ENCODE measurements at regions of chr19 and their contacts with region 1.

Region 1: DNA sequence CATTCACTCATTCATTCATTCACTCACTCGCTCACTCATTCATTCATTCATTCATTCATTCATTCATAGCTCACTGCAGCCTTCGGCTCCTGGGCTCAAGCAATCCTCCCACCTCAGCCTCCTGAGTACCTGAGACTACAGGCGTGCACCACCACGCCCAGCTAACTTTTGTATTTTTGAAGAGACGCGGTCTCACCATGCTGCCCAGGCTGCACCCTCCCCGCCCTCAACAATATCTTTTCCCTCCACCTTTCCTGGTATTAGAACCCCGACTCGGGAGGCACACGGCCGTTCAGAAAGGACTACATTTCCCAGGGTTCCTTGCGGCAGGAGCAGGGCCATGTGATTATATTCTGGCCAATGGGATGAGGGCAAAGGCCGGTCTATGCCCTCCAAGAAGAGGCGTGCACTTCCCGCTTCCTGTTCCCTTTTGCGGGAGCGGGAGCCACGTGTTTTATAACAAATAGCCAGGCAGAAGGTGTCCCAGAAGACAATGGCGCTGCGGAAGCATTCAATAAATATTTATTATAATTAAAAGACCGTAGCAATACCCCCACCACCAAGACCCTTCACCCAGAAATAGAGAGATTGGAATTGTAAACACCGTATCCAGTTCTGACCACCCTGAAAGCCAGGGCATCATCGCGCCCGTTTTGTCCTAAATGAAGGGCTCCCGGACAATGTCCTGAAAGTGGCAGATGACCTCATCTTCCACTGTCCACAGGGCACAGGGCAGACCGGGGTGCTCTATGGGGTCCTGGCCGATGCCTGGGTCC is 15.9 kb downstream of the TICAM1 start:
- DNase-seq: peak; percentile 63
- H3K4me3 Mint-ChIP-seq: peak overlapping the region; percentile 70
- H3K27ac Mint-ChIP-seq: peak overlapping the region; percentile 40
- H3K4me1 Mint-ChIP-seq: peaks cover 14% of the 10 kb centered on the region
- H3K27me3 Mint-ChIP-seq: no peaks in the 10 kb centered on the region

Region 2: GRCh38 chr19:4841366-4841704 is 25.7 kb after region 1 on chr19:
- intact Hi-C with region 1: no loop called
- DNase-seq: no peak
- H3K4me3 Mint-ChIP-seq: no peak overlapping the region
- H3K27ac Mint-ChIP-seq: peak overlapping the region; percentile 51
- H3K4me1 Mint-ChIP-seq: peaks cover 8% of the 10 kb centered on the region
- H3K27me3 Mint-ChIP-seq: no peaks in the 10 kb centered on the region

Region 3: GRCh38 chr19:4851551-4852290 is 36.1 kb after region 1 on chr19:
- intact Hi-C with region 1: loop called (anchors 1 kb)
- DNase-seq: peak; percentile 62
- H3K4me3 Mint-ChIP-seq: no peak overlapping the region
- H3K27ac Mint-ChIP-seq: no peak overlapping the region
- H3K4me1 Mint-ChIP-seq: no peaks in the 10 kb centered on the region
- H3K27me3 Mint-ChIP-seq: no peaks in the 10 kb centered on the region

Region 4: GRCh38 chr19:4909897-4910593 is 94.4 kb after region 1 on chr19:
- intact Hi-C with region 1: loop called (anchors 2 kb)
- DNase-seq: peak; percentile 94
- H3K4me3 Mint-ChIP-seq: peak overlapping the region; percentile 88
- H3K27ac Mint-ChIP-seq: peak overlapping the region; percentile 84
- H3K4me1 Mint-ChIP-seq: peaks cover 39% of the 10 kb centered on the region
- H3K27me3 Mint-ChIP-seq: no peaks in the 10 kb centered on the region

Region 5: GRCh38 chr19:5031231-5032100 is 215.9 kb after region 1 on chr19:
- intact Hi-C with region 1: loop called (anchors 10 kb)
- DNase-seq: peak; percentile 66
- H3K4me3 Mint-ChIP-seq: no peak overlapping the region
- H3K27ac Mint-ChIP-seq: no peak overlapping the region
- H3K4me1 Mint-ChIP-seq: no peaks in the 10 kb centered on the region
- H3K27me3 Mint-ChIP-seq: no peaks in the 10 kb centered on the region